GM13977 (cell line): ENCODE measurements at regions of chr7 and their contacts with region 1.

Region 1: GRCh38 chr7:123865517-123866117 is 20.6 kb downstream of the HYAL4 start:
- DNase-seq: peak; percentile 26
- CTCF ChIP-seq: peak; percentile 69

Region 2: GRCh38 chr7:123682690-123683089 is 182.9 kb before region 1 on chr7:
- in situ Hi-C with region 1: loop called (anchors 10 kb)
- DNase-seq: no peak
- CTCF ChIP-seq: peak; percentile 49